Endothelial cell of umbilical vein (primary cell): ENCODE measurements at regions of chr20 and their contacts with region 1.

Region 1: DNA sequence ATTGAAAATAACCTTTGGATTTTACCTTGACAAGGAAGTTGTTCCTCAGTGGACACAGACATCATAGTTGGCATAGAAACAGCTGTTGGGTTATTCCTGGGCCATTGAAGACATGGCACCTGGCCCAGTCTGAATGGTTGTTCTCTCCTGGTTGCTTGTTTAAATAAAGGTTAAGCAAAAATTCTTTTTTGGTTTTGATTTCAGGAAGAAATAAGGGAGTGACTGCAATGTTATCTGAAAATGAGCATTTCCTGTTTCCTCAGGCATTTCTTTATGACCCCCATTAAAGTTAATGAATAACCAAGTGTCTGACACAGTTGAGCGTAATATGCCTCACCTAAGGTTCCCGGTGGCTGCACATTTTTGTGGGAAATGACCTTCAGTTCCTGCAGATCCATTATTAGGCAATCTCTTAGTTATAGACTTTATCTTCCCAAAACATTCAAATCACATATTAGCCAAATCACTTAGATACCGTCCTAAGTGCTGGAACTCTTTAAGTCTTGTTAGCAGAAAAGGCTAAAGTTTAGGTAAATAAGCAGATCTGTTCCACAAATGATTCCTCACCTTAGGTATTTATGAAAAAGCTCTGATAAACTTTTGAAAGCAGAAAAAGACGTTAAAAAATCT is 648.7 kb upstream of the FLRT3 start:
- DNase-seq: peak; percentile 82
- H3K4me3 ChIP-seq: no peak overlapping the region
- H3K27ac ChIP-seq: peak overlapping the region; percentile 79
- H3K4me1 ChIP-seq: peaks cover 29% of the 10 kb centered on the region
- H3K27me3 ChIP-seq: no peaks in the 10 kb centered on the region
- CTCF ChIP-seq: no peak
- POLR2A ChIP-seq: peak; percentile 29

Region 2: GRCh38 chr20:14780508-14780907 is 205.6 kb before region 1 on chr20:
- CTCF ChIA-PET with region 1: no interaction called
- POLR2A ChIA-PET with region 1: no interaction called
- dilution Hi-C with region 1: no loop called
- intact Hi-C with region 1: loop called (anchors 5 kb)
- DNase-seq: peak; percentile 31
- H3K4me3 ChIP-seq: no peak overlapping the region
- H3K27ac ChIP-seq: no peak overlapping the region
- H3K4me1 ChIP-seq: peaks cover 5% of the 10 kb centered on the region
- H3K27me3 ChIP-seq: peaks cover 2% of the 10 kb centered on the region in 2 experiments
- CTCF ChIP-seq: no peak
- POLR2A ChIP-seq: no peak

Region 3: DNA sequence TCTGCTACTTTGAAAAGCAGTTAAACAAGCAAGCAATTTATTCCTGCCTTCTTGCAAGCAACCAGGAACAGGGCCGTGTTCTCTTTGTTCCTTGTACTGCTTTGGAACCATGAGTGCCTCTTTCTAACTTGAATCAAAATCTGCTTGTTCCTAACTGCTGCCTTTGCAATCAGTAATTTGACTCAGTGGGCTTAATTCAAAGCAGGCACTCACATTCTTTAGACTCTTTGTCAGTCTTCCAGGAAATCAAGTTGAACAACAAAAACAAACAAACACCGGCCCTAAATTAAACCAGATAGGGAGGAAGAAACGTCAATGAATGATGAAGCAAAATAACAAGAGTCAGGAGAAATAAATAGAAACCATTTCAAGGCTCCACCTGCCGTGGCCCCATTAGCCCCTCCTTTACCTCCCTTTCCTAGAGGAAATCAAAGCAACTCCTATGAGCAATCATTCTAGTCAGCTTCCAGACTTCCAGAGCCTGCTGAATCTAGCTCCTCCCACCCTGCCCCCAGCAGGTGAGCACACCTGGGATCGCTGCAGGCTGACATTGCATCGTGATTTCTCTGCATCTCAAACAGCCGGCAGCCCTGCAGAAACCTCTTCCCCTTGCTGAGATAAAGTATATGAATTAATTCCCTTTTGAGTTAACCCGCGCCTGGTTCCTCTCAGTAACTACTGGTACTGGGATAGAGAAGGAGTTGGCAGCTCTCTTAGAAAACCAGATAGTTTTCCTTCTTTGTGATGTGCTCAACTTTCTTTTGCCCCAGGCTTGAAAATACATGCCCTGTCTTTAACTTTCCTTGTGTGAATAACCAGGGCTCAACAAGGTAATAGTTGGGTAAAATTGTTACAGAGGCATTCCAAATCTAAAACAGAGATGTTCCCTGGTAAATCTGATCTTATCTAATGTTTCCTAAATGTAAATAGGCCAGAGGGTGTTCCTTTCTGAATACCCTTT is 66.4 kb before region 1 on chr20:
- CTCF ChIA-PET with region 1: interaction called, 4 read pairs
- POLR2A ChIA-PET with region 1: no interaction called
- dilution Hi-C with region 1: no loop called
- intact Hi-C with region 1: loop called (anchors 1 kb)
- DNase-seq: peak; percentile 52
- H3K4me3 ChIP-seq: no peak overlapping the region
- H3K27ac ChIP-seq: no peak overlapping the region
- H3K4me1 ChIP-seq: peaks cover 35% of the 10 kb centered on the region
- H3K27me3 ChIP-seq: no peaks in the 10 kb centered on the region
- CTCF ChIP-seq: no peak
- POLR2A ChIP-seq: no peak

Region 4: DNA sequence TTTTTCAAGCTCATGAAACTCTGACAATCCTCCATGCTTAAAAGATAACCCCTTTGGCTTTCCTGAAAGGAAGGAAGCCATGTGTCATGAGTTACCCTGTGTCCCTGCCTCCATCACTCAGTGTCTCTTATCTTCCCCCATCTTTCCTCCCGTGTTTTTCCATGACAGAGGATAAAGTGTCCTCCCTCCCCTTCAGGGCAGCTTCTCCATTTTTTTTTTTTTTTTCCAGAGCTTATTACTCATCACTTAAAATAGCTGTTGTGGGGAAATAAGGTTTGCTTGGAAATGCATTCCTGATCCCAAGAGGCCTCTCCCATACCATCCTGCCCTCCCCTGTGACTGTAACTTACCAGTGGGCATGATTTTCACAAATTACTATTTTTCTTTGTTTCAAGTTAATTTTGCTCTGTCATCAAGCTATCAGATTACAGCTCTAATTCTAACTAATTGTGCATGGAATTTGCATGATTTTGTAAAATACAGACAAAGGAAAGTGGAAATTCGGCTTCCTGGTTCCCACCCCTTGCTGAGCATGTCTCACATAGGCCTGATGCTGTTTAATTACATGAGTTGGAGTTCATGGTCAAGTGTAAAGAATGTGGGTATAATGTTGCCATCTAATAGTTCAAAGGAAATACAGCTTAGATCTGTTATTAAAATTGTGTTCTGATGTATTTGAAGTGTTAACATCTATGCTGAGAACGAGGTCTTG is 34.3 kb before region 1 on chr20:
- CTCF ChIA-PET with region 1: interaction called, 4 read pairs
- POLR2A ChIA-PET with region 1: interaction called, 13 read pairs
- dilution Hi-C with region 1: no loop called
- intact Hi-C with region 1: loop called (anchors 1 kb)
- DNase-seq: peak; percentile 84
- H3K4me3 ChIP-seq: no peak overlapping the region
- H3K27ac ChIP-seq: peak overlapping the region; percentile 84
- H3K4me1 ChIP-seq: peaks cover 21% of the 10 kb centered on the region
- H3K27me3 ChIP-seq: no peaks in the 10 kb centered on the region
- CTCF ChIP-seq: no peak
- POLR2A ChIP-seq: no peak

Region 5: DNA sequence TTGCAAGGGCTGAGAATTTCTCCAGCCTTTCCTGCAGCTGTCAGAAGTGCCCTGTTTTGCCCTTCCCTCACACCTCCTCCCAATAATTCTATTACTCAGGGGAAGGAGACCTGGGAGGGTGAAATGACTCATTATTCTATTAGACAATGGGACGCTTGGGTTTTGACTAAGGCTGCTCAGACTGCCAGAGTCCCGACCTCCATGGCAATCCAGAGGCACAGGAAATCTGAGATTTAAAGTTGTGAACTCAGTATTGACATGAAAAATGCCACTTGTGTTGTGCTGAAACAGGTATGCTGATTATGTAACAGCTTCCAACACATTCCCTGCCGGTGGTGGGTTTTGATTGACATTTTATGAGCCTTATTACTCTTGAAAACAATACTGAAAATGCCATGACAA is 22.9 kb before region 1 on chr20:
- CTCF ChIA-PET with region 1: interaction called, 15 read pairs
- POLR2A ChIA-PET with region 1: interaction called, 5 read pairs
- dilution Hi-C with region 1: no loop called
- intact Hi-C with region 1: loop called (anchors 1 kb)
- DNase-seq: peak; percentile 90
- H3K4me3 ChIP-seq: peak overlapping the region in 1 of 3 experiments; percentile 3
- H3K27ac ChIP-seq: peak overlapping the region; percentile 70
- H3K4me1 ChIP-seq: peaks cover 14% of the 10 kb centered on the region
- H3K27me3 ChIP-seq: no peaks in the 10 kb centered on the region
- CTCF ChIP-seq: no peak
- POLR2A ChIP-seq: no peak

Region 6: GRCh38 chr20:14997635-14998185 is 11.6 kb after region 1 on chr20:
- CTCF ChIA-PET with region 1: interaction called, 12 read pairs
- POLR2A ChIA-PET with region 1: no interaction called
- dilution Hi-C with region 1: no loop called
- intact Hi-C with region 1: loop called (anchors 1 kb)
- DNase-seq: peak; percentile 60
- H3K4me3 ChIP-seq: no peak overlapping the region
- H3K27ac ChIP-seq: peak overlapping the region; percentile 43
- H3K4me1 ChIP-seq: peaks cover 7% of the 10 kb centered on the region
- H3K27me3 ChIP-seq: no peaks in the 10 kb centered on the region
- CTCF ChIP-seq: no peak
- POLR2A ChIP-seq: no peak

Region 7: GRCh38 chr20:15236812-15237211 is 250.7 kb after region 1 on chr20:
- CTCF ChIA-PET with region 1: no interaction called
- POLR2A ChIA-PET with region 1: no interaction called
- dilution Hi-C with region 1: no loop called
- intact Hi-C with region 1: loop called (anchors 5 kb)
- DNase-seq: peak; percentile 69
- H3K4me3 ChIP-seq: no peak overlapping the region
- H3K27ac ChIP-seq: no peak overlapping the region
- H3K4me1 ChIP-seq: no peaks in the 10 kb centered on the region
- H3K27me3 ChIP-seq: no peaks in the 10 kb centered on the region
- CTCF ChIP-seq: peak; percentile 70 to 71
- POLR2A ChIP-seq: no peak